Caco-2 (cell line): ENCODE measurements at regions of chr14 and their contacts with region 1.

Region 1: DNA sequence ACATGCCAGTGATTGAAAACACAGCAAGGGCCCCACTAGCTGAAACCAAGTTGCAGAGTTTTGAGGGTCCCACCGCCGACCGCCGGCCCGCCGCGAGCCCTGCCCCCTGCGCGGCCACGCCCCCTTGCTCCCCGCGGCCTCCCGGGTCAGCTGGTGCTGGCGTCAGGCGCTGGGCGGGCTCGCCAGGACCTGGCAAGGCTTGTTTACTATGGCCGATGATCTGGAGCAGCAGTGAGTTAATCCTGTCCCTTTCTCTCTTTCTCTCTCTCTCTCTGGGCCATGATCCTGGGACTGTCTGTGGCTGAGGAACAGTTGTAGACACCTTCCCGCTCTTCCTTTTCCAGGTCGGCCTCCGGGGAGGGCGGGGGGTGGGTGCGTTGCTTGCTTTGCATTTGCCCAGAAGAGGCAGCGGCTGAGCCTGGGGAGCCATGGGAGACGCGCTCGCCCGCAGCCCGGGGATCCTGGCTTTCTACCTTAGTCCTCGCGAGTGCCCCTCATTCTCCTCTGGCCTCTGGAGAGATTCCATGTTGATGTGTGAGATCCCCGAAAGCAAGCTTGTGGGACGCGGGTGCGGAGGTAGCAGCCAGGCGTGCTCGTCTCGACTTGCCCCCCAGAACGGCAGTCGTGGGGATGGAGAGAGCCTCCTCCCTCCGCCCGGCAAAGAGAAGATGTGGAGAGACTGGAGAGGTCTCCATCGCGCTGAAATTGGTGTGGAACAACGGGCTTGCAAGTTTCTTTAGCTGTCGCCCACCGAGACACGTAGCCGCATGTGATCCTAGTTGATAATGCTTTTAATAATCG is at the start of gene ABHD4:
- DNase-seq: peak; percentile 74 to 85
- H3K4me3 ChIP-seq: peak within 1 kb of the TSS; percentile 84
- H3K4me3 Mint-ChIP-seq: peak within 1 kb of the TSS; percentile 97
- H3K27ac Mint-ChIP-seq: peak within 1 kb of the TSS; percentile 94
- H3K4me1 ChIP-seq: peaks cover 55% of the 10 kb centered on the region
- H3K4me1 Mint-ChIP-seq: peaks cover 19% of the 10 kb centered on the region
- H3K27me3 ChIP-seq: no peaks in the 10 kb centered on the region
- H3K27me3 Mint-ChIP-seq: no peaks in the 10 kb centered on the region
- CTCF ChIP-seq: no peak
- total RNA-seq, gene ABHD4: 64.5 and 73.5 TPM in 2 replicates

Region 2: DNA sequence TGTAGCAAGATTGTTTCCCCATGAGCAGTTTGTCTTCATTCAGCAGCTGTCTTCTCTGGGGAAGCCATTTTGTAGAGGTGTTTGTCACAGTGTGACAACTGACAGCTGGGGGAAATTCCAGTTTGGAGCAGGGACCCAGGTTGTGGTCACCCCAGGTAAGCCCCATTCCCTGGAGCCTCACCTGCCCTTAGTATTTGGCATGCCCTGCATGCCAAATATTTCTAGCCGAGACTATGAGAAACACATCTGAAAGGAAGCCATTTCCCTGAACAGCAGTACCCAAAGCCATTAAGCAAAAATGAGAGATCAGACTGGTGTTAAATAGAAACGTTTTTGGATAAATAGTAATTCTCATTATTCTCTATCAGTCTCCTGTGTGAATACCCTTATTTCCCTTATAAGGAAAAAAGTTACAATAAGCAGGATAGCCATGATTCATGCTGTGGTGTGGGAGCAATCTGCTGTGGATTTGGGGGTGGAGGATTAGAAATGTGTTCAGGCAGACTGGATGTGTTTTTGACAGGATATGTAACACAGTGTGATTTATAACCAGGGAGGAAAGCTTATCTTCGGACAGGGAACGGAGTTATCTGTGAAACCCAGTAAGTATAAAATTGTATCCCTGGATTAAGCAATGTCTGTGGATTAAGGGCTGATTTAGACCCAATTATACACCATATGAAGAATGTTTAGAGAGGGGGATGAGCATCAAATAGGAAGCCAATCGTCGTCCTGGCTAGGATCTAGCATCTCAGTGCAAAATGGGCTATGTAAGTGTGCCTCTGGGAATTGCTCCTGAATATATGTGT is 78.2 kb before region 1 on chr14:
- CTCF ChIA-PET with region 1: no interaction called
- POLR2A ChIA-PET with region 1: no interaction called
- intact Hi-C with region 1: no loop called
- DNase-seq: no peak
- H3K4me3 ChIP-seq: no peak overlapping the region
- H3K4me3 Mint-ChIP-seq: no peak overlapping the region
- H3K27ac Mint-ChIP-seq: no peak overlapping the region
- H3K4me1 ChIP-seq: peaks cover 11% of the 10 kb centered on the region
- H3K4me1 Mint-ChIP-seq: peaks cover 25% of the 10 kb centered on the region
- H3K27me3 ChIP-seq: no peaks in the 10 kb centered on the region
- H3K27me3 Mint-ChIP-seq: no peaks in the 10 kb centered on the region
- CTCF ChIP-seq: no peak

Region 3: GRCh38 chr14:22614224-22614799 is 16.0 kb after region 1 on chr14:
- CTCF ChIA-PET with region 1: interaction called, 8 read pairs
- POLR2A ChIA-PET with region 1: interaction called, 3 read pairs
- intact Hi-C with region 1: loop called (anchors 2 kb)
- DNase-seq: peak; percentile 88 to 94
- H3K4me3 ChIP-seq: no peak overlapping the region
- H3K4me3 Mint-ChIP-seq: peak overlapping the region; percentile 46
- H3K27ac Mint-ChIP-seq: peak overlapping the region; percentile 99
- H3K4me1 ChIP-seq: peaks cover 28% of the 10 kb centered on the region
- H3K4me1 Mint-ChIP-seq: peaks cover 26% of the 10 kb centered on the region
- H3K27me3 ChIP-seq: no peaks in the 10 kb centered on the region
- H3K27me3 Mint-ChIP-seq: no peaks in the 10 kb centered on the region
- CTCF ChIP-seq: no peak

Region 4: DNA sequence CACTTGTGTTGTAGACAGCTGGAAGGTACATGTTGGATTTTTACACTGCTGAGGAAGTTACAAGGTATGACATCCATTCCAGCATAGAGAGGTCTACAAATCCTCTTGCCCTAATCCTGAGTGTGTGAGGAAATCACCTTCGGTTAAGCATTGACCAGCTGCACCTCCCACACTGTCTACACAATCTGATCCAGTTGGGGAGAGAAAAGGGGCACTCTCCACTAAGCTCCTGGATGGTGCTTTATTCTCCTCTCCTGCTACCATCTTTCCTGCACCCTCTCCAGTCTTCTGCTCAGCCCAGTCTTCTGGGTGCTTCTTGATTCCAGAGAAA is 46.0 kb after region 1 on chr14 and contains the start of gene OR6J1:
- CTCF ChIA-PET with region 1: interaction called, 10 read pairs
- POLR2A ChIA-PET with region 1: interaction called, 4 read pairs
- intact Hi-C with region 1: loop called (anchors 1 kb)
- DNase-seq: no peak
- H3K4me3 ChIP-seq: no peak within 1 kb of the TSS
- H3K4me3 Mint-ChIP-seq: peak within 1 kb of the TSS; percentile 12
- H3K27ac Mint-ChIP-seq: peak within 1 kb of the TSS; percentile 48
- H3K4me1 ChIP-seq: peaks cover 14% of the 10 kb centered on the region
- H3K4me1 Mint-ChIP-seq: peaks cover 17% of the 10 kb centered on the region
- H3K27me3 ChIP-seq: no peaks in the 10 kb centered on the region
- H3K27me3 Mint-ChIP-seq: no peaks in the 10 kb centered on the region
- CTCF ChIP-seq: no peak
- total RNA-seq, gene OR6J1: 0.16 and 0.18 TPM in 2 replicates

Region 5: DNA sequence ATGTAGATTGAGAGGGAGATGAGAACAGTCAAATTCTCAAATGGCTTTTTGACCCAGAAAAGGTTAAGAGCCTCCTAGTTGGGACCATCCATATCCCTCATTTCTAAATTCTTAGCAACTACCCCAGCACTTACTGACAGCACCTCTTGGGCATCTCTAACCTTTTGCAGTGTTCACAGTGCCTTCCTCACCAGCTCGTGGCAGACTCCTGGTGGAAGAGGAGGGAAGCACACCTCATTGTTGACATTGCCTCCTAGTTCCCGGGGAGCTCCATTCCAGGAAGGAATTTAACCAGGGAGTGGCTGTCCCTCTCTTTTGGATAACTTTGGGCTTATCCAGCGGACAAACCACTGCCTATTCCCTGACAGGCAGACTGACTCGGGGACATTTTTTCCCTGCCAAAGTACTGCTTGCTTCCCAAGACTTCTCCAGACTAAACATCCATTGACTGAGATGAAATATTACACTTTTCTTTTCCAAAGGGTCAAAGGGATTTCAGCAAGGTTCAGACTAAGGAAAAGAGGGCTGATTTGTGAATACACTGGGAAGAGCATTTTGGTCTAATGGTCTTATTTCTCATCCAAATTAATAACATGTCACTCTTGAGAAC is 54.8 kb after region 1 on chr14:
- CTCF ChIA-PET with region 1: interaction called, 6 read pairs
- POLR2A ChIA-PET with region 1: interaction called, 6 read pairs
- intact Hi-C with region 1: loop called (anchors 2 kb)
- DNase-seq: peak; percentile 85 to 86
- H3K4me3 ChIP-seq: no peak overlapping the region
- H3K4me3 Mint-ChIP-seq: no peak overlapping the region
- H3K27ac Mint-ChIP-seq: peak overlapping the region; percentile 68
- H3K4me1 ChIP-seq: peaks cover 31% of the 10 kb centered on the region
- H3K4me1 Mint-ChIP-seq: peaks cover 12% of the 10 kb centered on the region
- H3K27me3 ChIP-seq: no peaks in the 10 kb centered on the region
- H3K27me3 Mint-ChIP-seq: no peaks in the 10 kb centered on the region
- CTCF ChIP-seq: peak; percentile 80 to 91